MCF 10A (cell line): ENCODE measurements at regions of chr2 and their contacts with region 1.

Region 1: DNA sequence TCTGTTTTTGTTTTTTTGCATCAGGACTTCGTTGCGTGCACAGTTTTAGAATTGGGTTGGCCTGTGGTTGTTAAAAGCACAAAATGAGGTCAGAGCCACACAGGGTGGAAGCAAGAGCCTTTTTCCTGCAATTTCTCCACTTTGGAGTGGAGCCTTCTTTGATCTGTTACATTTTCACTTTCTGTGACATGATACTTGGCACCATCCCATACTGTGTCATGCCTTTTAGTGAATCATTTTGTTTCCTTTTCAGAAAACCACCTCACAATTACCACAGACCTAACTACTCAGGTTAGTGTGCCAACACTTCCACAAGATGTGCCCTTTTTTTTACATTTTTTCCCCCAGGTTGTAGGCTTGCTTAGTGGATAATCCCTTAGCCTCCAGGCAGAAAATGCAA is 32.5 kb downstream of the MERTK start:
- DNase-seq: peak; percentile 91
- H3K4me3 Mint-ChIP-seq: peak overlapping the region; percentile 10
- H3K27ac Mint-ChIP-seq: peak overlapping the region; percentile 29
- H3K4me1 Mint-ChIP-seq: peaks cover 9% of the 10 kb centered on the region
- H3K27me3 Mint-ChIP-seq: peaks cover 70% of the 10 kb centered on the region
- CTCF ChIP-seq: no peak

Region 2: GRCh38 chr2:110998311-110998710 is 932.6 kb before region 1 on chr2:
- CTCF ChIA-PET with region 1: no interaction called
- POLR2A ChIA-PET with region 1: no interaction called
- intact Hi-C with region 1: no loop called
- DNase-seq: no peak
- H3K4me3 Mint-ChIP-seq: no peak overlapping the region
- H3K27ac Mint-ChIP-seq: no peak overlapping the region
- H3K4me1 Mint-ChIP-seq: peaks cover 9% of the 10 kb centered on the region
- H3K27me3 Mint-ChIP-seq: peaks cover 52% of the 10 kb centered on the region
- CTCF ChIP-seq: no peak

Region 3: DNA sequence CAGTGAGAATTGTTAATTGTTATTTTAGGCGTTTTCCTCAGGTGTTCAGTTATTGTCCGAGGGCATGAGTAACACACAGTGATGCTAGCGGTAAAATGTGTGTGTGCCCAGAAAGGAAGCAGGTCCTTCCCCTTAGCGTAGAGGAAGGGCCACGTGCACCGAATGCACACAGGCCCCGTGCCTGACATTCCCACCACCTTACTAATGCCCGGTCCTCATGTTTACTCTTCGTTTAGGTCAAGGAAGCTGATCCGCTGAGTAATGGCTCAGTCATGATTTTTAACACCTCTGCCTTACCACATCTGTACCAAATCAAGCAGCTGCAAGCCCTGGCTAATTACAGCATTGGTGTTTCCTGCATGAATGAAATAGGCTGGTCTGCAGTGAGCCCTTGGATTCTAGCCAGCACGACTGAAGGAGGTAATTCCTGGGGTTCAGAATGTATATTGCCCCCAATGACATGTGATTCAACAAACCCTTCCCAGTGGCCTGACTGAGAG is 44.2 kb after region 1 on chr2:
- CTCF ChIA-PET with region 1: no interaction called
- POLR2A ChIA-PET with region 1: no interaction called
- intact Hi-C with region 1: loop called (anchors 2 kb)
- DNase-seq: peak; percentile 97
- H3K4me3 Mint-ChIP-seq: peak overlapping the region; percentile 7
- H3K27ac Mint-ChIP-seq: peak overlapping the region; percentile 24
- H3K4me1 Mint-ChIP-seq: peaks cover 17% of the 10 kb centered on the region
- H3K27me3 Mint-ChIP-seq: peaks cover 17% of the 10 kb centered on the region
- CTCF ChIP-seq: no peak